B cell (primary cell): ENCODE measurements at regions of chr18 and their contacts with region 1.

Region 1: DNA sequence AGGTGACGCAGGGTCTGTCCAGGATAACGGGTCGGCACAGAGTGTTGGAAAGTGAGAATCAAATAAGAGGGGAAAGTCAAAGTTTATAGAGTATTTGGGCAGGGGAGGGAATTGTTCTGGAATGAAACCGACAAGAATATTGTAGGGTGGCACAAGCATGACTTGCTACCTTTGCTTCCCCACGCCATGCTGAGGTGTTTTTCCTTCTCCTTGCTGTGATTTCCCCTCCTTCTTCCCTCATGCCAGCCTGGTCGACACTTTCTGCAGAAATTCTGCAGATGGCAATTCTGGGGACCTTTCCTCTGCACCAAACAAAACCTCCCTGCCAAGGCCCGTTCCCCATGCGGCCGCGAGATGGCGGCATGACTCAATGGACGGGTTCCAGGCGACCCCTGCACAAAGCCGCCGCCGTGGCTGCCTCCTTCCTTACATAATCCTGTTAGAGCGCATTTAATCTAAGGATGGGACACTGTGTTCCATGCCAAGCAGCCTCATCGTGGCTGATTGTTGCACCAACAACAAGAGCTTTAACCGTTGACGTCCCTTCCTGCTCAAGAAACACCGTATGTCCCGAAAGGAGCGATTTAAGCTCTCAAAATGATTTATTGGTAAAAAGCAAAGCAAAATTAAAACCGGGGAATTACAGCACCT is at the start of gene MRO:
- DNase-seq: peak; percentile 84
- ATAC-seq: peak; percentile 83
- H3K4me3 ChIP-seq: peak within 1 kb of the TSS; percentile 20 to 60 (median 53)
- H3K4me3 Mint-ChIP-seq: peak within 1 kb of the TSS; percentile 17
- H3K27ac ChIP-seq: no peak within 1 kb of the TSS
- H3K27ac Mint-ChIP-seq: no peak within 1 kb of the TSS
- H3K4me1 ChIP-seq: peaks cover 44 to 47% of the 10 kb centered on the region in 2 donors
- H3K4me1 Mint-ChIP-seq: peaks cover 22% of the 10 kb centered on the region
- H3K27me3 ChIP-seq: no peaks in the 10 kb centered on the region
- H3K27me3 Mint-ChIP-seq: no peaks in the 10 kb centered on the region
- CTCF ChIP-seq: peak; percentile 97
- total RNA-seq, gene MRO: not detected in 2 replicates

Region 2: GRCh38 chr18:50775222-50775621 is 44.6 kb before region 1 on chr18:
- CTCF ChIA-PET with region 1: no interaction called
- POLR2A ChIA-PET with region 1: no interaction called
- intact Hi-C with region 1: no loop called
- DNase-seq: no peak
- ATAC-seq: no peak
- H3K4me3 ChIP-seq: no peak overlapping the region
- H3K4me3 Mint-ChIP-seq: no peak overlapping the region
- H3K27ac ChIP-seq: no peak overlapping the region
- H3K27ac Mint-ChIP-seq: no peak overlapping the region
- H3K4me1 ChIP-seq: no peaks in the 10 kb centered on the region
- H3K4me1 Mint-ChIP-seq: no peaks in the 10 kb centered on the region
- H3K27me3 ChIP-seq: no peaks in the 10 kb centered on the region
- H3K27me3 Mint-ChIP-seq: peaks cover 20% of the 10 kb centered on the region
- CTCF ChIP-seq: no peak

Region 3: GRCh38 chr18:50836521-50836957 is 16.7 kb after region 1 on chr18:
- CTCF ChIA-PET with region 1: interaction called, 70 read pairs
- POLR2A ChIA-PET with region 1: no interaction called
- intact Hi-C with region 1: no loop called
- DNase-seq: peak; percentile 41
- ATAC-seq: peak; percentile 76
- H3K4me3 ChIP-seq: peak overlapping the region in 1 of 5 experiments; percentile 29
- H3K4me3 Mint-ChIP-seq: peak overlapping the region; percentile 69
- H3K27ac ChIP-seq: no peak overlapping the region
- H3K27ac Mint-ChIP-seq: peak overlapping the region; percentile 59
- H3K4me1 ChIP-seq: peaks cover 16 to 19% of the 10 kb centered on the region in 2 donors
- H3K4me1 Mint-ChIP-seq: peaks cover 33% of the 10 kb centered on the region
- H3K27me3 ChIP-seq: peaks cover 0 to 3% (median 0%) of the 10 kb centered on the region in 4 experiments
- H3K27me3 Mint-ChIP-seq: no peaks in the 10 kb centered on the region
- CTCF ChIP-seq: no peak

Region 4: DNA sequence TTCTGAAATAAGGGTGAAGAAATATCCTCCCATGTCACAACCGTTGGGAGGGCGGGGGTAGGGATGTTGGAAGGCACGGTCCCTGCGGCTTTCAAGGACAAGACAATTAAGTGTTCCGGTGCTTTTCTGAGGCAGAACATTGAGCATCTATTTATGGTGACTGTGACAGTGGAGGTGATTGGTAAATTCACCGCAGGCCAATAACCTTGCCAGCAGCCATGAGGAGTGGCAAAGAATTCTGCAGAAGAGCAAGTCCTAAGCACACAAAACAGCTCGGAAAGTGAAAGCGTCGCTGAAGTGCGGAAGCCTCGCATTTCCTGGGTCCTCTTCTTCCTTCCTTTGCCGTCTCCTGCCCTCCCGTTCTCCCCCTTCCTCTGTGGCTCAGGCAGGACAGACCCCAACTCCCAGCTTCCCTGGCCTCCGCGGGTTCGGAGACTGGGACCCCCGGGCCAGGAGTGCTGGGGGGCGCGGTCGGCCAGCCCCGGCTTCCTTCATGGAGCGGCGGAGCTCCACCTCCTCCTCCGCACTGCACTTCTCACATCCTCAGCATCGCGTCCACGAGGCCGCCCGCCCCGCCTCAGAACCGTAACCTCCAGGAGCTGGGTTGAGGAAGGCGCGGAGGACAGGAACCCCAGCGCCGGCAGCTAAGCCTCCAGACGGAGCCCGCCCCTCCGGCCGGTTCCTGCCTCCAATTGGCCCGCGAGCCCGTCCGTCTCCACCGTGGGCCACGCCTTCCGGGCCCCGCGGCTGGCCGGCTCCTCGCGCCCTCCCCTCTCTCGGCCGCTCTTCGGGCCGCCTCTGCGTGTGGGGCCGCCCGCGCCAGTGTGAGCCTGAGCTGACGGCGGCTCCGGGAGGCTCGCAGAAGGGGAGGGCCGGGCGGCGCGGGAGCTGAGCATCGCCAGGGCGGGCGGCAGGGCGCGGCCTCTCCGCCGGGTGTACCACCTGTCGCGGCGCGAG is 58.8 kb after region 1 on chr18 and contains the start of gene ME2:
- CTCF ChIA-PET with region 1: interaction called, 17 read pairs
- POLR2A ChIA-PET with region 1: interaction called, 4 read pairs
- intact Hi-C with region 1: loop called (anchors 2 kb)
- DNase-seq: peak; percentile 94
- ATAC-seq: peak; percentile 93
- H3K4me3 ChIP-seq: peak within 1 kb of the TSS; percentile 80 to 95 (median 90)
- H3K4me3 Mint-ChIP-seq: peak within 1 kb of the TSS; percentile 98
- H3K27ac ChIP-seq: peak within 1 kb of the TSS; percentile 96 to 98
- H3K27ac Mint-ChIP-seq: peak within 1 kb of the TSS; percentile 99
- H3K4me1 ChIP-seq: peaks cover 20 to 25% of the 10 kb centered on the region in 2 donors
- H3K4me1 Mint-ChIP-seq: peaks cover 30% of the 10 kb centered on the region
- H3K27me3 ChIP-seq: no peaks in the 10 kb centered on the region
- H3K27me3 Mint-ChIP-seq: peaks cover 3% of the 10 kb centered on the region
- CTCF ChIP-seq: no peak
- total RNA-seq, gene ME2: 55.4 and 57.8 TPM in 2 replicates

Region 5: GRCh38 chr18:51029694-51030536 is 210.1 kb after region 1 on chr18 and contains the start of gene SMAD4:
- CTCF ChIA-PET with region 1: interaction called, 4 read pairs
- POLR2A ChIA-PET with region 1: no interaction called
- intact Hi-C with region 1: loop called (anchors 5 kb)
- DNase-seq: peak; percentile 97
- ATAC-seq: peak; percentile 83
- H3K4me3 ChIP-seq: peak within 1 kb of the TSS; percentile 61 to 81 (median 74)
- H3K4me3 Mint-ChIP-seq: peak within 1 kb of the TSS; percentile 97
- H3K27ac ChIP-seq: peak within 1 kb of the TSS; percentile 78 to 84
- H3K27ac Mint-ChIP-seq: peak within 1 kb of the TSS; percentile 99
- H3K4me1 ChIP-seq: peaks cover 22 to 42% of the 10 kb centered on the region in 2 donors
- H3K4me1 Mint-ChIP-seq: peaks cover 53% of the 10 kb centered on the region
- H3K27me3 ChIP-seq: no peaks in the 10 kb centered on the region
- H3K27me3 Mint-ChIP-seq: no peaks in the 10 kb centered on the region
- CTCF ChIP-seq: no peak
- total RNA-seq, gene SMAD4: 136 and 146 TPM in 2 replicates

Region 6: GRCh38 chr18:51153659-51154371 is 334.0 kb after region 1 on chr18:
- CTCF ChIA-PET with region 1: interaction called, 3 read pairs
- POLR2A ChIA-PET with region 1: no interaction called
- intact Hi-C with region 1: loop called (anchors 5 kb)
- DNase-seq: peak; percentile 81
- ATAC-seq: peak; percentile 71
- H3K4me3 ChIP-seq: peak overlapping the region; percentile 26 to 76 (median 57)
- H3K4me3 Mint-ChIP-seq: peak overlapping the region; percentile 92
- H3K27ac ChIP-seq: peak overlapping the region; percentile 95
- H3K27ac Mint-ChIP-seq: peak overlapping the region; percentile 100
- H3K4me1 ChIP-seq: peaks cover 28 to 41% of the 10 kb centered on the region in 2 donors
- H3K4me1 Mint-ChIP-seq: peaks cover 49% of the 10 kb centered on the region
- H3K27me3 ChIP-seq: no peaks in the 10 kb centered on the region
- H3K27me3 Mint-ChIP-seq: no peaks in the 10 kb centered on the region
- CTCF ChIP-seq: no peak

Region 7: GRCh38 chr18:51417643-51418483 is 598.0 kb after region 1 on chr18:
- CTCF ChIA-PET with region 1: no interaction called
- POLR2A ChIA-PET with region 1: no interaction called
- intact Hi-C with region 1: no loop called
- DNase-seq: no peak
- ATAC-seq: no peak
- H3K4me3 ChIP-seq: no peak overlapping the region
- H3K4me3 Mint-ChIP-seq: no peak overlapping the region
- H3K27ac ChIP-seq: no peak overlapping the region
- H3K27ac Mint-ChIP-seq: no peak overlapping the region
- H3K4me1 ChIP-seq: no peaks in the 10 kb centered on the region
- H3K4me1 Mint-ChIP-seq: peaks cover 4% of the 10 kb centered on the region
- H3K27me3 ChIP-seq: no peaks in the 10 kb centered on the region
- H3K27me3 Mint-ChIP-seq: no peaks in the 10 kb centered on the region
- CTCF ChIP-seq: no peak